A549 (cell line): ENCODE measurements at regions of chr20 and their contacts with region 1.

Region 1: GRCh38 chr20:50987592-50988210 is 29.1 kb downstream of the MOCS3 start:
- DNase-seq: peak; percentile 76 to 92
- ATAC-seq: peak; percentile 96
- H3K4me3 ChIP-seq: no peak overlapping the region
- H3K27ac ChIP-seq: peak overlapping the region; percentile 38 to 75; a peak in 3 of 6 replicates
- H3K4me1 ChIP-seq: peaks cover 4% of the 10 kb centered on the region; the same call in 2 of the 3 replicates
- CTCF ChIP-seq: peak; percentile 92
- EP300 ChIP-seq: no peak
- POLR2A ChIP-seq: no peak
- RAD21 ChIP-seq: peak; percentile 96 to 98

Region 2: DNA sequence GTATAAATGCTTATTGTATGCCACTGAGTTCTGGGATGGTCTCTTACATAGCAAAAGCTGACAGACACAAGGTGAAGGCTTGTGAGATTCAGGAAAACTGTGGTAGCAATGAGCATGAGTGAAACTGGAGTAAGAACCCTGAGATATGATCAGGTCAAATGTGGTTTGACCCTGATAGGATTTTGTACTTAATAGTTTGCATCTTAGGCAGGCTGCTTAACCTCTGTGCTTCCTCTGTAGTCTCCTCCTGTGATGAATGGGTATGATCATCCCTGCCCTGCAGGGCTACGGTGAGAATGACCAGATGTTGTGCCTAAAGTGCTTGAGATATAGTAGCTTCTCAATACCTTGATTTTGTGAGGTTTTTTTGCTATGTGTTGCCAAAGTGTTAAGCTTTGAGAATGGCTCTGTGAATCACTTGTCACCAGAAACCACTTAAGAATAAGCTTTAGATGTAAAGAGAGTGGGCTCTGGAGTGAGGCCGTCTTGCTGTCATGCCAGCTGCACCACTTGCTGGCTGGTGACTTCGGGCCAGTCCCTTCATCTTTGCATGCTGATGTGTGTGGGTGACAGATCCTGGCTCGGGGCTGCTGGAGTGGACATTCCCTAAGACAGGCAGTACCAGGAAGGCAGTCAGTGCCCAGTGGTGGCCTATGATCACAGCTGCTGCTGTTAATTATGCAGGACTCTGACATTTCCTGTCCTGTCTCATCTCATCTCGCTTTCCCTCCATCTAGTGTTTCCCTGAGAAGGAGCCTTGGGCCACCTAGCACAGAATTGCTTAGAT is 300.1 kb after region 1 on chr20:
- CTCF ChIA-PET with region 1: interaction called, 11 read pairs
- POLR2A ChIA-PET with region 1: no interaction called
- DNase-seq: no peak
- ATAC-seq: no peak
- H3K4me3 ChIP-seq: no peak overlapping the region
- H3K27ac ChIP-seq: no peak overlapping the region
- H3K4me1 ChIP-seq: no peaks in the 10 kb centered on the region
- CTCF ChIP-seq: no peak
- EP300 ChIP-seq: no peak
- POLR2A ChIP-seq: no peak
- RAD21 ChIP-seq: no peak

Region 3: GRCh38 chr20:51318058-51318895 is 330.6 kb after region 1 on chr20:
- CTCF ChIA-PET with region 1: interaction called, 60 read pairs
- POLR2A ChIA-PET with region 1: no interaction called
- DNase-seq: peak; percentile 32 to 37
- ATAC-seq: peak in 1 of 2 experiments; percentile 84; a peak in 3 of 6 replicates
- H3K4me3 ChIP-seq: no peak overlapping the region
- H3K27ac ChIP-seq: peak overlapping the region in 1 of 2 experiments; percentile 47; a peak in 1 of 6 replicates
- H3K4me1 ChIP-seq: no peaks in the 10 kb centered on the region
- CTCF ChIP-seq: peak; percentile 43
- EP300 ChIP-seq: no peak
- POLR2A ChIP-seq: no peak
- RAD21 ChIP-seq: 0 out of 5 replicates have a peak, but pooled peaks of 1 of the 2 experiments have one; percentile 5

Region 4: DNA sequence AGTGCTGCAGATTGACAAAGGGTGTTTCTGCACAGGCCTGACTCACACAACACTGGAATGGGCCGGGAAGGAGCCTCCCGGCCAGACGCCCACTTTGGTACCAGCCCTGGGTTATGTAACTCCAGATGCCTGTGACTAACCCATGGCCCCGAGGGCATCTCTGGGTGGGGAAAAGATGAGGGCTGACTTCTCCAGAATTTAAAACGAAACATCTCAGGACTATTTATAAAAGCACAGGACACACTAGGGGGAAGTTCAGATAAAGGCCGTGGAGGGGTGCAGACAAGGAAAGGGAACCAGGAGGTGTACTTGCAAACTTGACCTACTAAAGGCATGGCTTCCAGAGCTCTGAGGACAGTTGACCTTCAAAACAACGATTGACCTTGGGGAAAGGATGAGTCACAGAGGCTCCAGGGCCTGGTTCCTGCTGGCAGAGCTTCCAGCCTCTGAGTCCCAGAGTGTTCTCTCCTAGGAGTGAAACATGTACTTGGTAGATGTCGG is 357.9 kb after region 1 on chr20:
- CTCF ChIA-PET with region 1: interaction called, 15 read pairs
- POLR2A ChIA-PET with region 1: no interaction called
- DNase-seq: peak; percentile 24 to 60
- ATAC-seq: peak; percentile 70 to 82
- H3K4me3 ChIP-seq: no peak overlapping the region
- H3K27ac ChIP-seq: peak overlapping the region; percentile 76 to 81
- H3K4me1 ChIP-seq: peaks cover 27% of the 10 kb centered on the region
- CTCF ChIP-seq: no peak
- EP300 ChIP-seq: peak; percentile 27 to 52; a peak in 2 of 5 replicates
- POLR2A ChIP-seq: no peak
- RAD21 ChIP-seq: no peak

Region 5: GRCh38 chr20:51378171-51378929 is 390.6 kb after region 1 on chr20:
- CTCF ChIA-PET with region 1: interaction called, 16 read pairs
- POLR2A ChIA-PET with region 1: no interaction called
- DNase-seq: peak in 1 of 2 experiments; percentile 43
- ATAC-seq: peak in 1 of 2 experiments; percentile 48; a peak in 2 of 6 replicates
- H3K4me3 ChIP-seq: no peak overlapping the region
- H3K27ac ChIP-seq: no peak overlapping the region
- H3K4me1 ChIP-seq: peaks cover 7% of the 10 kb centered on the region
- CTCF ChIP-seq: no peak
- EP300 ChIP-seq: no peak
- POLR2A ChIP-seq: no peak
- RAD21 ChIP-seq: peak; percentile 51 to 67

Region 6: DNA sequence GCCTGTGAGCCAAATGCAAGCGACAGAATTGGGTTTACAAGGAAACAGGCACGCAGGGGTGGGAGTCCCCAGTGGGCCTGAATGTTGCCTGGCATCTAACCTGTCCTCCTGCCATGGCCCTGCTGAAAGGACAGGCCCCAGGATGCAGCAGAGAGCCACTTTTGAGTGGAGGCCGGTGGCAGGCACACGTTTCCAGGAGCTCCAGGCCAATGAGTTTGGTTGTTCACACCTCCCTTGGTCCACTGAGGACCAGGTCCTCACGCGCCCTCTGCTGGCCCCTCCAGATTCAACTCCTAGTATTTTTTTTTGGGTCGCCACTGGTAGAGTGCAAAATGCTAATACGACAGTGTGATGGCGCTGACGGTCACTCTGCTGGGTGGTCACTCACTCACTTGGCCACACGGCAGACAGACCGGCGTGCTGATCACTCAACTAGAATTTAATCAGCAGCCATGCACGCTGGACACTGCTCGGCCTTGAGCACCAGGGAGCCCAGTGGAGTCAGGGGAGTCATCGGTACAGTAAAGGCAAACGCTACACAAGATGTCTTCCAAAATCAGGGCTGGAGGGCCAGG is 636.5 kb after region 1 on chr20:
- CTCF ChIA-PET with region 1: interaction called, 45 read pairs
- POLR2A ChIA-PET with region 1: no interaction called
- DNase-seq: peak; percentile 75
- ATAC-seq: peak; percentile 76 to 92; a peak in 5 of 6 replicates
- H3K4me3 ChIP-seq: no peak overlapping the region
- H3K27ac ChIP-seq: peak overlapping the region in 1 of 2 experiments; percentile 58; a peak in 4 of 6 replicates
- H3K4me1 ChIP-seq: no peaks in the 10 kb centered on the region
- CTCF ChIP-seq: peak; percentile 78
- EP300 ChIP-seq: no peak
- POLR2A ChIP-seq: no peak
- RAD21 ChIP-seq: peak; percentile 68 to 79